ENCODE measurements at regions of chr17 and their contacts with region 1.

Region 1: GRCh38 chr17:44636562-44636961 is 19.7 kb upstream of the MEIOC start:
- DNase-seq: no peak
- ATAC-seq: peak; percentile 72
- H3K4me3 ChIP-seq: no peak overlapping the region
- H3K27ac ChIP-seq: no peak overlapping the region
- H3K4me1 ChIP-seq: no peaks in the 10 kb centered on the region
- H3K27me3 ChIP-seq: no peaks in the 10 kb centered on the region

Region 2: GRCh38 chr17:43994272-43995149 is 642.1 kb before region 1 on chr17:
- intact Hi-C with region 1: no loop called
- DNase-seq: peak; percentile 70 to 88
- ATAC-seq: peak; percentile 75
- H3K4me3 ChIP-seq: no peak overlapping the region
- H3K27ac ChIP-seq: no peak overlapping the region
- H3K4me1 ChIP-seq: no peaks in the 10 kb centered on the region
- H3K27me3 ChIP-seq: no peaks in the 10 kb centered on the region

Region 3: DNA sequence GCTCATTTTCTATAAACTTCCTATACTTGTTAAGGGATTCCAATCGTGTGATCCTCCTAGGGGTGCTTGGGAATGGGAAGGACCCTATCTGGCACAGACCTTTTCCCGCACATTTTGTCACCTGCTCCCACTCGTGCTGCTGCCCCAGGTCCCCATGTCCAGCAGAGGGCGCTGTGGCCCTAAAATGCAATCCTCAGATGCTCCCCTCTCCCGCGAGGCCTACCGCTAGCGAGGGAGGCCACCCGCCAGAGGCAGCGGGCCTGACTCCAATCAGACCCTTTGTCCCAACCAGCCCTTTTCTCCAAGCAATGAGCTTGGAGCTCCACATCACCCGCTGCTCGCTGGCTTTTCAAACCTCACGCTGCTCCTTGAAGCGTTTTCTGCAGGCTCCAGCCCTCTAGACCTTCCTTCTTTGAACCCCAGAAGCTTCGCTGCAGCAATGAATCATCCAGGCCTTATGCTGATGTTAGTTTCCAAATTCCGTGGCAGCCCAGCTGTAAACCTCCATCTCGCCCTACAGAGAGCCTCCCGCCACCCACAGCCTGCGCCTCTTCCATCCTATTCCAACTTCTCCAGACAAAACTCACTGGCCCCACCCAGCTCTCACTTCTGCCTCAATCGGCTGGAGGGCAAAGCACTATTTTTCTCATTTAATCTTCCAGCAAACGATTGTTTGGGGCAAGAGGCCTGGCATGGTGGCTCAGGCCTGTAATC is 102.9 kb before region 1 on chr17:
- intact Hi-C with region 1: loop called (anchors 1 to 2 kb)
- DNase-seq: peak; percentile 95 to 98
- ATAC-seq: peak; percentile 94
- H3K4me3 ChIP-seq: no peak overlapping the region
- H3K27ac ChIP-seq: peak overlapping the region in 1 of 2 donors; percentile 11
- H3K4me1 ChIP-seq: no peaks in the 10 kb centered on the region
- H3K27me3 ChIP-seq: no peaks in the 10 kb centered on the region

Region 4: DNA sequence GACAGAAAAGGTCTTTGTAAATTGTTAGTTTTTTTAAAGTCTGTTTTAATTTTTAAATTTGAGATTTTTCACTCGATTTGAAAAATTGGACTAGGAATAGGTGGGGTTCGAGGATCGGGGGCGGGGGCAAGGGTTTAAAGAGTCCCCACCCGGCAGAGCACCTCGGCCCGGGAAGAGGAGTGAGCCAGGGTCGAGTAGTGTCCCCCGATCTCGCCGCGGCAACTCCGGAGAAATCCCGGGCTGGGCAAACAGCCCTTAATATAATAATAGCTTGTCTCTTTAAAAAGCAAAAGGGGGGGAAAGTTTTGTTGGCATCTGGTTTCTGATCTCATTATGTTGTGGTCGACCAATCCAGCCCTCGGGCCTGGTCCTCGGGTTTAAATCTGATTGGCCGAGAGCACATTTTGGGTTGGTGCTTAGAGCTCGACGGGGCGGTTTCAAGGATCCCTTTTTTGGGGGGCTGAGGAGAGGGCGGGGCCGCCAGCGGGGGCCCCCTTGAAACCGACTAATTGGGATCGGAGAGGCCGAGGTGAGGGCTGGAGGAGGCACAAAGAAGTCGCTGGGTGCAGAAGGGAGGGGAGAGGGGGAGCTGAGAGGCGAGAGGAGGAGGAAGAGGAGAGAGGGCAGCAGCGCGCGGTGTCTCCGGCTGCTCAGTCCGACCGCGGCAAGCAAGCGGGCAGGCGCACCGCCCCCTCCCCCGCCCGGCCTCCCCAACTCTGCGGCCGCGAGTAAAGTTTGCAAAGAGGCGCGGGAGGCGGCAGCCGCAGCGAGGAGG is 79.5 kb before region 1 on chr17 and contains the start of gene FZD2:
- intact Hi-C with region 1: no loop called
- DNase-seq: peak; percentile 91 to 94
- ATAC-seq: peak; percentile 92
- H3K4me3 ChIP-seq: peak within 1 kb of the TSS; percentile 67 to 76
- H3K27ac ChIP-seq: peak within 1 kb of the TSS; percentile 65 to 74
- H3K4me1 ChIP-seq: no peaks in the 10 kb centered on the region
- H3K27me3 ChIP-seq: no peaks in the 10 kb centered on the region
- total RNA-seq, gene FZD2: 7.4 to 22.1 TPM

Region 5: GRCh38 chr17:44587339-44587738 is 49.2 kb before region 1 on chr17:
- intact Hi-C with region 1: loop called (anchors 10 kb)
- DNase-seq: peak; percentile 85 to 88
- ATAC-seq: peak; percentile 90
- H3K4me3 ChIP-seq: no peak overlapping the region
- H3K27ac ChIP-seq: peak overlapping the region; percentile 88 to 96
- H3K4me1 ChIP-seq: peaks cover 0 to 9% of the 10 kb centered on the region in 2 donors
- H3K27me3 ChIP-seq: no peaks in the 10 kb centered on the region

Region 6: DNA sequence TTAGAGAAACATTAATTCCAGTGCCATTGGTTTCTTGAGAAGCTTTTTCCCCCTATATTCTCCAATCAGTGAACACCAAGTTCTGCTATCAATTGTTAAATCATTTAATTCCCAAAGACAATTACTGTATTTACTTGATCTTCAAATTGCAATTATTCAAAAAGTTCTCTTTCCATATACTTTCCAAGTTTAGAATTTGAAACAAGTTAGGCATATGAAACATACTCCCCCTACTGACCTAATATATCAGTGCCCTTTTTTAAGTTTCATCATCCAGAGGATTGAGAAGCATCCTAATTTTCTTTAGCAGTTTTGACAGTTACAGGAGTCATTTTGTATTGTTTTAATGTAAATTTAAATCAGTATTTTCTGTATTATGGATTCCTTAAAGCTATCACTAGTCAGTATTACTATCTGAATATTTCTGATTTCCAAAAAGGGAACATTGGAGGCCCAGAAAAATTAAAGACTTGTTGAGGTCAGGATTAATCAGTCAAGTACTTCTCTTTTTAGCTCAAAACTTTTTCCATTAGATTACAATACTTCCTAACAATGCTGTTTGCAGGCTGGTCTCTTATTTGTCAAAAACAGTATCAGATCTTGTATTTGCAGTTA is 36.0 kb after region 1 on chr17:
- intact Hi-C with region 1: no loop called
- DNase-seq: no peak
- ATAC-seq: no peak
- H3K4me3 ChIP-seq: no peak overlapping the region
- H3K27ac ChIP-seq: no peak overlapping the region
- H3K4me1 ChIP-seq: no peaks in the 10 kb centered on the region
- H3K27me3 ChIP-seq: no peaks in the 10 kb centered on the region